Activated CD4-positive, alpha-beta memory T cell treated with anti-CD3 and anti-CD28 coated beads, Interleukin-2, amount 10 ng/mL, durations not matched to agents 7 days and 5 days (primary cell): ENCODE measurements at regions of chr6 and their contacts with region 1.

Region 1: GRCh38 chr6:35311390-35312075 is 13.9 kb downstream of the DEF6 start:
- DNase-seq: peak; percentile 78
- H3K4me3 Mint-ChIP-seq: peak overlapping the region; percentile 59
- H3K27ac Mint-ChIP-seq: peak overlapping the region; percentile 98
- H3K4me1 Mint-ChIP-seq: peaks cover 85% of the 10 kb centered on the region
- H3K27me3 Mint-ChIP-seq: no peaks in the 10 kb centered on the region

Region 2: GRCh38 chr6:35024551-35025054 is 286.9 kb before region 1 on chr6:
- CTCF ChIA-PET with region 1: no interaction called
- POLR2A ChIA-PET with region 1: no interaction called
- DNase-seq: no peak
- H3K4me3 Mint-ChIP-seq: no peak overlapping the region
- H3K27ac Mint-ChIP-seq: no peak overlapping the region
- H3K4me1 Mint-ChIP-seq: no peaks in the 10 kb centered on the region
- H3K27me3 Mint-ChIP-seq: no peaks in the 10 kb centered on the region

Region 3: GRCh38 chr6:35173427-35174087 is 138.0 kb before region 1 on chr6:
- CTCF ChIA-PET with region 1: no interaction called
- POLR2A ChIA-PET with region 1: no interaction called
- DNase-seq: peak; percentile 49
- H3K4me3 Mint-ChIP-seq: no peak overlapping the region
- H3K27ac Mint-ChIP-seq: peak overlapping the region; percentile 75
- H3K4me1 Mint-ChIP-seq: peaks cover 19% of the 10 kb centered on the region
- H3K27me3 Mint-ChIP-seq: peaks cover 8% of the 10 kb centered on the region

Region 4: DNA sequence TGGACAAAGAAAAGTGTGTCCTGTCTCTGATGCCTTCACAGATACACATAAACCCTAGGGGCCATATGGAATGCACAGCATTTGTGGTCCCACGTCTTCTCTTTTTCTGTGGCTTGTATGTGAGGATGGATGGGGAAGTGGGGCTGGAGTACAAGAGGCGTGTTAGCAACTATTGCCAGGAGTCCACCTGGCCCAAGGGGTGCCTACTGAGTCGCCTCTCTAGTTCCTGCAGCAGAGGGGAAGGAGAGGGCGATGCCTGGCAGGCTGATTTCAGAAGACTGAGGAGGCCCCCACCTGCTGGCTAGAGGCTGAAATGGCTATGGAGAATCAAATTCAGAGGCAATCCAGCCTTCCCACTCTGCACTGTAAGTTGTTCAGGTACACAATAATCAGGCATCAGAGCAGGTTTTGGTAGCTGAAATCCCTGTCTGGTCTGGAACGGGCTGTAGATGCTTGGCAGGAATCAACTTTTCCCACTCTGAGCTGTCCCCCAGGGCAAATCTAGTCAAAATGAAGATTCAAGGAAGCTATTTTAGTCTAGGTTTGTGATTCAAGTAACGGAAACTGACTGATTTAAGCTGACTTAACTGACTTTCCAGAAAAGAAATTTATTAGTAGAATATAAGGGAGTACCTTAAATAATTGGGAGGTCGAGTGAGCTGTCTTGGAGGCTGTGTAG is 16.0 kb after region 1 on chr6:
- CTCF ChIA-PET with region 1: interaction called, 34 read pairs
- POLR2A ChIA-PET with region 1: interaction called, 29 read pairs
- DNase-seq: peak; percentile 81
- H3K4me3 Mint-ChIP-seq: no peak overlapping the region
- H3K27ac Mint-ChIP-seq: peak overlapping the region; percentile 44
- H3K4me1 Mint-ChIP-seq: peaks cover 24% of the 10 kb centered on the region
- H3K27me3 Mint-ChIP-seq: no peaks in the 10 kb centered on the region